ENCODE measurements at regions of chr14 and their contacts with region 1.

Region 1: DNA sequence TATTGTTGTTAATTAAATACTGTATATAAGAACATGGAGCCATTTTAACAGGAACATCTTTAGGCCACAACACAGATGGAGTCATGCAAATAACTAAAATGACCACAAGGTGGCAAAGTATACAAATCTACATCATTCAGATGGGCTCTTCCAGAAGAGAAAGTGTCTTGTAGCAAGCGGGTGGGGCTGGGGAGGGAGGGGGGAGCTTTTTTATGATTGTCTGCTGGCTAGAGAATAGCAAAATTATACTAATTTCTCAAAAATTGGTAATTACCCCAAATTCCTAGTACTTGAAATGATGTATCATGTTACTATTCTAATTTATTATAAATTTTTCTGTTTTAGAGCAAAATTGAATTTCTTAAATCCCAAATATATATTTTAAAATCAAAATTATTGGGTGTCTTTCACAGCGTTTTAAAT is 378.7 kb downstream of the PRKD1 start:
- DNase-seq: no peak
- ATAC-seq: peak; percentile 81

Region 2: GRCh38 chr14:30005114-30005808 is 456.3 kb after region 1 on chr14:
- intact Hi-C with region 1: loop called (anchors 10 kb)
- DNase-seq: no peak
- ATAC-seq: peak; percentile 88

Region 3: GRCh38 chr14:30681752-30682355 is 1132.9 kb after region 1 on chr14:
- intact Hi-C with region 1: no loop called
- DNase-seq: no peak
- ATAC-seq: no peak